ENCODE measurements at regions of chr3 and their contacts with region 1.

Region 1: DNA sequence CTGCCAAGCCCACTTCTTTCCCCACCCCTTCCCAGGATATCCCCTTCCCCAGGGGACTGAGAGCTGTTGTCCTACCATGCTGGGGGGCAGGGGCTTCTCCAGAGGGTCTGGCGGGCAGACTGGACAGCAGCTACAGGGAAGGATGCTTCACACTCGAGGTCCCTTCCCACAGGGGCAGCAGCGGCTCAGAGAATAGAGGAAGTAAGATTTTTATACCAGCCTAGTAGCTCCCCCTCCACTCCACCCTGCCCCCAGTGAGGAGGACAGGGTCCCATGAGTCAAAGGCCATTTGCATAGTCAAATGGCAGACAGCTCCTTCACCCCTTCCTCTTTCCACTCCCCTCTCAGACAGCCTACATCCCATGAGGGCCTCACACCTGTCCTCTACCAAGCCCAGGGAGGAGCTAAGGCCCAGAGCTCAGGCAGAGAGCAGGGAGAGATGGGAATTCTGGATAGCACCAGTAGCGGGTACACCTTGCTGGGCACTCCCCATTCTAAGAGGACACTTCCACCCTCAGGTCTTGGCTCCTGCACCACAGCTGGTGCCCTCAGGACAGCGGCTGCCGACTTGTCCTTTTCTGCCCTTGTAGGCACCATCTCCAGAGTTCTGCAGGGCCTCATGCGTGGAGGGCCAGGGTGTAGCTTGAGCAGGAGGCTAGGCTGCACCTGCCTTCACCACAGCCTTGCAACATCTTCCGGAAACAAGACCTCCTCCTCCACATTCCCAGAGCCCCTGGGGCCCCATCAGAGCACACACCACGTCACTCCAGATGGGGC is at the start of gene TLR9:
- DNase-seq: peak; percentile 71
- ATAC-seq: peak; percentile 91
- H3K4me3 ChIP-seq: peak within 1 kb of the TSS; percentile 60
- H3K27ac ChIP-seq: peak within 1 kb of the TSS; percentile 76
- H3K4me1 ChIP-seq: peaks cover 22% of the 10 kb centered on the region
- H3K27me3 ChIP-seq: no peaks in the 10 kb centered on the region
- CTCF ChIP-seq: no peak
- EP300 ChIP-seq: peak in 1 of 2 experiments; percentile 51; a peak in 1 of 4 replicates
- POLR2A ChIP-seq: peak; percentile 80
- RAD21 ChIP-seq: no peak
- polyA plus RNA-seq, gene TLR9: 0.10 TPM in 1 of 2 experiments, not detected in the other

Region 2: DNA sequence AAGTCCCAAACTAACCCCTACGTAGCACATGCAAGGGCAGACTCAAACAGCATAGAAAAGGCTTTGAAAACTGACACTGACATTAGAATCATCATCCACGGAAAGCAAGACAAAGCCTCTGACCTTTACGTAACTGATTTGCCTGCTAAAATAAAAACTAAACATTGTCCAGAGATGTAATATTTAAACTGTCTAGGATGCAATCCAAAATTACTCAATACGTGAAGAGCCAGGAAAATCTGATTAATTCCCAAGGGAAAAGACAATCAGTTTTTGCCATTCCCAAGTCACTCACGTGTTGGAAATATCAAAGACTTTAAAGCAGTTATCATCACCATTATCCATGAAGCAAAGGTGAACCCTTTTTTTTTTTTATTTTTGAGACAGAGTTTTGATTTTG is 309.2 kb before region 1 on chr3:
- CTCF ChIA-PET with region 1: no interaction called
- POLR2A ChIA-PET with region 1: no interaction called
- RAD21 ChIA-PET with region 1: no interaction called
- SMC1A ChIA-PET with region 1: no interaction called
- in situ Hi-C with region 1: no loop called
- intact Hi-C with region 1: no loop called
- DNase-seq: no peak
- ATAC-seq: no peak
- H3K4me3 ChIP-seq: no peak overlapping the region
- H3K27ac ChIP-seq: no peak overlapping the region
- H3K4me1 ChIP-seq: no peaks in the 10 kb centered on the region
- H3K27me3 ChIP-seq: no peaks in the 10 kb centered on the region
- CTCF ChIP-seq: no peak
- EP300 ChIP-seq: no peak
- POLR2A ChIP-seq: no peak
- RAD21 ChIP-seq: no peak

Region 3: GRCh38 chr3:52154117-52155094 is 71.2 kb before region 1 on chr3 and contains the start of gene POC1A:
- CTCF ChIA-PET with region 1: interaction called, 3 read pairs
- POLR2A ChIA-PET with region 1: no interaction called
- RAD21 ChIA-PET with region 1: interaction called, 13 read pairs
- SMC1A ChIA-PET with region 1: no interaction called
- in situ Hi-C with region 1: no loop called
- intact Hi-C with region 1: no loop called
- DNase-seq: peak; percentile 86
- ATAC-seq: peak; percentile 92
- H3K4me3 ChIP-seq: peak within 1 kb of the TSS; percentile 76
- H3K27ac ChIP-seq: peak within 1 kb of the TSS; percentile 75
- H3K4me1 ChIP-seq: peaks cover 7% of the 10 kb centered on the region
- H3K27me3 ChIP-seq: no peaks in the 10 kb centered on the region
- CTCF ChIP-seq: no peak
- EP300 ChIP-seq: 0 out of 4 replicates have a peak, but pooled peaks of 1 of the 2 experiments have one; percentile 11
- POLR2A ChIP-seq: peak; percentile 75
- RAD21 ChIP-seq: no peak
- polyA plus RNA-seq, gene POC1A: 8.5 to 13.0 TPM

Region 4: DNA sequence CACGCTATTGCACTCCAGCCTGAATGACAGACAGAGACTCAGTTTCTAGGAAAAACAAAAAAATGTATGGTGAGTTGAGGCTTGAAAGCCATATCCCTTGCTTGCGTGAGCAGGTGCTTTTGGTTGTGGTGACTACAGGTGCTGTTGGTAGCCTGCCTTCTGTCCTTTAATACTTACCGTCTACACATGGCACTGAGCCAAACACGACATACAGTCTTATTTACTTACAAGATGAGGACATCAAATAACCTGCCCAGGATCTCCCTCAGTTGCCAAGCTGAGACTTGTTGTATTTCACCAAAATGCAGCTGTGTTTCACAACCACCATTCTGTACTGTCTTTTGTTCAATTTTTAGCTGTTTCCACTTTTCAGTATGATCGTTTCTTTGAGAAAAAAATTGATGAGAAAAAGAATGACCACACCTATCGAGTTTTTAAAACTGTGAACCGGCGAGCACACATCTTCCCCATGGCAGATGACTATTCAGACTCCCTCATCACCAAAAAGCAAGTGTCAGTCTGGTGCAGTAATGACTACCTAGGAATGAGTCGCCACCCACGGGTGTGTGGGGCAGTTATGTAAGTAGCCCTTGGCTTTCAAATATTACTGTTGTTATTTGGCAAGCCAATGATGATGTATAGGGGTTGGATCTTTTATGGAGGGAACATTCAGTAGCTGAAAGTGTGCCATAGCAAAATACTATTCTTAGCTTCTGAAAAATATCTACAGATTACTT is 21.1 kb before region 1 on chr3:
- CTCF ChIA-PET with region 1: interaction called, 59 read pairs
- POLR2A ChIA-PET with region 1: interaction called, 10 read pairs
- RAD21 ChIA-PET with region 1: interaction called, 22 read pairs
- SMC1A ChIA-PET with region 1: interaction called, 28 read pairs
- in situ Hi-C with region 1: no loop called
- intact Hi-C with region 1: no loop called
- DNase-seq: no peak
- ATAC-seq: peak; percentile 16; the same call in 1 of the 3 replicates
- H3K4me3 ChIP-seq: peak overlapping the region; percentile 3; the same call in 1 of the 2 replicates
- H3K27ac ChIP-seq: no peak overlapping the region
- H3K4me1 ChIP-seq: peaks cover 21% of the 10 kb centered on the region; the same call in 1 of the 2 replicates
- H3K27me3 ChIP-seq: no peaks in the 10 kb centered on the region
- CTCF ChIP-seq: no peak
- EP300 ChIP-seq: no peak
- POLR2A ChIP-seq: no peak
- RAD21 ChIP-seq: no peak

Region 5: DNA sequence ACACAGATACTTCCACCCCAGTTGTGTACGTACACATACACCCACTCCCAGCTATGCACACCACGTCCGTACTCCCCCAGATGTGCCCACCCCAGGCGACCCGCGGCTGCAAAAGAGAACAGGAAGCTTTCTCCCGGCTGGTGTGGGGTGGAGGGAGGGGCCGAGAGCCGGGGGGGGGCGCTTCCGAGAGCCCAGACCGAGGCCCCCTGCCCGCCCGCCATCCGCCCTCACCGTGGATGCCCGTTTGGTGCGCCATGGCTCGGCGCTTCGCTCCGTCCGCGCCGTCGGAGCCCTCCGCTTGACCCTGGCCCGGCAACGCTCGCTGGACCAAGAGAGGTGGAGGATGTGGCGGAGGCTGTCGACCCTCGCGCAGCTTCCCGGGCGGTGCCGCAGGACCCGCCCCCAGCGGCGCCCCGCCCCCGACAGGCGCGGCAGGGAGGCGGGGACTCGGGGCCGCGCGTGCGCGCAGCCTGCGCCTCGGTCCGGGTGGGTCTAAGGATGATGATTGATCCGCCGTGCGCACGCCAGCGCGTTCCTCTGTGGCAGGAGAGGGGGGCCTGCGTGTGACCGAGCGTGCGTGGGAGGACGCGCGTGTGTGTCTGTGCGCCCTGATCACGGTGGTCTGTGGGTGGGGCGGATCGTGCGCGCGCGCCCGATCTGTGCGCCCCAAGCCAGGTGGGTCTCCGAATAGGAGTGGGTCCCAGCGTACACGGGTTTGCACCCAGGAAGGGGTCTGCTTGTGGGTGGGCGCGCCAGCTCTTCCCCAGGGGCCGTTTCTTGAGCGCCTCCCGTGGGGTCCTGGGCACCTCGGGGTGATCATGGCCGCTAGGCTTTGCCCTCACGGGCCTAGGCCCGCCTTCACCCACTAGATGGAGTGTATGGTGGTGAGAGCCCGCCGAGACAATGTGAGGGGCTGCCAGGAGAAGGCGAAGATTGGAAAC is 13.4 kb after region 1 on chr3 and contains the start of gene TWF2:
- CTCF ChIA-PET with region 1: interaction called, 26 read pairs
- POLR2A ChIA-PET with region 1: interaction called, 43 read pairs
- RAD21 ChIA-PET with region 1: interaction called, 13 read pairs
- SMC1A ChIA-PET with region 1: interaction called, 25 read pairs
- in situ Hi-C with region 1: no loop called
- intact Hi-C with region 1: no loop called
- DNase-seq: no peak
- ATAC-seq: peak; percentile 87
- H3K4me3 ChIP-seq: peak within 1 kb of the TSS; percentile 93
- H3K27ac ChIP-seq: peak within 1 kb of the TSS; percentile 88
- H3K4me1 ChIP-seq: peaks cover 40% of the 10 kb centered on the region
- H3K27me3 ChIP-seq: no peaks in the 10 kb centered on the region
- CTCF ChIP-seq: peak; percentile 43 to 49 (median 43)
- EP300 ChIP-seq: no peak
- POLR2A ChIP-seq: peak; percentile 91
- RAD21 ChIP-seq: peak; percentile 30; the same call in 1 of the 2 replicates
- polyA plus RNA-seq, gene TWF2: 0.16 to 3.4 TPM

Region 6: DNA sequence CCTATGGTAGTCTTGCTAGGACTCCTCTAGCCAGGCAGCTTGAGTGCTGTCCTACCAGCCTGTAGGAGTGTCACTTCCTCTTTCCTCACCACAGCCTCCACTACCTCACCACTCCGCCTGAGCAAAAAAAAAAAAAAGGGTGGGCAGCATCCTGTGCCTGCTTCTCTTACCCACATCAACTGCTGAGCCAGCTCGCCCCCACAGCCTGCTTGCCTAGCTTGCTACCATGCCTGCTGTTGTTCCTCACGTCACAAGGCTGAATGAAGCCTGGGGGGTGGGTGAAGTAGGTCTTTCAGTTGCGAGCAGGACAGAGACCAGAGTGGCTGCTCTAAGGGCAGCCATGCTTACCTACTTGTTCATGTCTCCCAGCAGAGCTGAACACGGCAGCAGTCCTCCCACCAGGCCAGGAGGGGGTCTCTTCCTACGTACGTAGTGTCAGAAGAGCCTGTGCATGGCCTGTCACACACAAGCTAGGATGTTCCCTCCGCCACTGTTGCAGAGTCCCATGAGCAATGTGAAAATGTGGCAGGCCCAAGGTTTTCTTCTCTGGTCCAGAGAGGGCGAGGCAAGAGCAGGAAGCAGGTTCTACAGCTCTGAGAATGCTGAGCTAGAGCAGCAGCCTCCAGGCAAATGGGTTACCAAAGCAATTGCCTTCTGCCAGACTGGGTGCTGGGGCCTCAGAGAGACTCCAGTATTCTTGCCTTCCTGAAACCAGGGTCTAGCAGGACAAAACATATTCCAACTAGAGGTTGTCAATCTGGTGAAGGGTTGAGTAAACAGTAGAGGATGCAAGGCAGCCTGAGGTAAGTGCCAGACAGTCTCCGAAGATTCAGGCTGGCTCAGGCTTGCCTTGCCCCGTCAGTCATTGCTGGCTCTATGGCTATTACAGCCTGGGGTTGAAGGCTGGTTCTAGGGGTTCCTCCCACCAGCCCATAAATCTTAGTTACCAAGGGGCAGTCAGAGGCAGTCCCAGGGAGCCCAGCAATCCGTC is 28.0 kb after region 1 on chr3:
- CTCF ChIA-PET with region 1: interaction called, 11 read pairs
- POLR2A ChIA-PET with region 1: interaction called, 12 read pairs
- RAD21 ChIA-PET with region 1: interaction called, 9 read pairs
- SMC1A ChIA-PET with region 1: interaction called, 9 read pairs
- in situ Hi-C with region 1: no loop called
- intact Hi-C with region 1: no loop called
- DNase-seq: peak; percentile 85
- ATAC-seq: peak; percentile 98
- H3K4me3 ChIP-seq: no peak overlapping the region
- H3K27ac ChIP-seq: peak overlapping the region; percentile 88
- H3K4me1 ChIP-seq: peaks cover 18% of the 10 kb centered on the region
- H3K27me3 ChIP-seq: no peaks in the 10 kb centered on the region
- CTCF ChIP-seq: no peak
- EP300 ChIP-seq: peak; percentile 66 to 86; a peak in 3 of 4 replicates
- POLR2A ChIP-seq: peak; percentile 75
- RAD21 ChIP-seq: 0 out of 2 replicates have a peak, but pooled peaks have one; percentile 2

Measured in GM12878 (cell line).